Right ventricle myocardium inferior (tissue), 1 donor: ENCODE measurements at regions of chr6 and their contacts with region 1.

Region 1: DNA sequence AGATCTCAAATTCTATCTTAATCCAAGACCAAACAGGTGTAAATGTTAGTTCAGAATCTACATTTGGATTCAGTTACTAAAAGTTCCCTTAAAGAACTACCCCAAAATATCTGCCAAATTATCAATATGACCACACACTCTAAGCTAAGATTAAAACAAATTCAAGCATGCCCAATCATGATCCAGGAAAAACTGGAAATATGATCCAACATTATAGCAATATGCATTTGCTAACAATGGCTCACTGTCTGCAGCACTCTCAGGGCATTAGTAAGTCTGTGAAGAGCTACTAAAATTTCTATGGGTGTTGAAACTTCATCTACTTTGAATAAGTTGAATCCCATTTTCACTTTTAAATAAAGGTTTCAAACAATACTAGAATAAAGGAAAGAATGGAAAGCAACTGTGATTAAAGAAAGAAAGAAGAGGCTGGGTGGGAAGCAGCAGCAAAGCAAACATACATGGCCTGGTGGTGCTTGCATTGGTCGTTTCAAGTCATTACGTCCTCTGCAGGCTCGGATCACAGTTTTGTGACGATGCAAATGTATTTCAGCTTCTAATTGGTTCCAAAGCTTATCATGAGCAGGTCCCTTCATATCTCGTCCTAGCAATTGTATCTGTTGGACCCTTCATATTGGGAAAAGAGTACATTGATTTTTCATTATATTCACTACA is 29.2 kb downstream of the GOPC start:
- DNase-seq: no peak
- ATAC-seq: no peak

Region 2: DNA sequence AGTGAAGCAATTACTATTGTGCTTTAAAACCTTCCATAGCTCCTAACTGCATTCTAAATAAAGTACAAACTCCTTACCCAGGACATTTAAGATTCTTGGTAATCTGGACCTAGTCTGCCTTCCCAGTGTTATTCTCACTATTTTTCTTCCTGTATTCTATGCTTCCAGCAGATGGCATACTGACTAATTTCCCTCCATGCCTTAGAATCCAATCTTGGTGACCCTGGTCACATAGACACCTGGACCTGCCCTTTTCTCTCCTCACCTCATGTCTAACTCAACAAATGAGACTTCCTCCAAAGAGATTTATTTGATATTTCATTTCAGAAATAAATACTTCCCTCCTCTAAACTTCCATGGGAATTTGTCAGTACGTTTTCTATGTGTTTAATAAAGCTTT is 173.2 kb before region 1 on chr6:
- intact Hi-C with region 1: no loop called
- DNase-seq: no peak
- ATAC-seq: no peak

Region 3: GRCh38 chr6:117592983-117593766 is 20.0 kb after region 1 on chr6:
- intact Hi-C with region 1: loop called (anchors 2 kb)
- DNase-seq: no peak
- ATAC-seq: peak; percentile 48